Activated naive CD4-positive, alpha-beta T cell treated with anti-CD3 and anti-CD28 coated beads for 36 hours (primary cell): ENCODE measurements at regions of chr14 and their contacts with region 1.

Region 1: GRCh38 chr14:61598980-61599379 is 96.3 kb upstream of the HIF1A start:
- DNase-seq: peak; percentile 66
- H3K4me3 Mint-ChIP-seq: peak overlapping the region; percentile 14
- H3K27ac Mint-ChIP-seq: peak overlapping the region; percentile 80
- H3K4me1 Mint-ChIP-seq: peaks cover 48% of the 10 kb centered on the region
- H3K27me3 Mint-ChIP-seq: no peaks in the 10 kb centered on the region

Region 2: DNA sequence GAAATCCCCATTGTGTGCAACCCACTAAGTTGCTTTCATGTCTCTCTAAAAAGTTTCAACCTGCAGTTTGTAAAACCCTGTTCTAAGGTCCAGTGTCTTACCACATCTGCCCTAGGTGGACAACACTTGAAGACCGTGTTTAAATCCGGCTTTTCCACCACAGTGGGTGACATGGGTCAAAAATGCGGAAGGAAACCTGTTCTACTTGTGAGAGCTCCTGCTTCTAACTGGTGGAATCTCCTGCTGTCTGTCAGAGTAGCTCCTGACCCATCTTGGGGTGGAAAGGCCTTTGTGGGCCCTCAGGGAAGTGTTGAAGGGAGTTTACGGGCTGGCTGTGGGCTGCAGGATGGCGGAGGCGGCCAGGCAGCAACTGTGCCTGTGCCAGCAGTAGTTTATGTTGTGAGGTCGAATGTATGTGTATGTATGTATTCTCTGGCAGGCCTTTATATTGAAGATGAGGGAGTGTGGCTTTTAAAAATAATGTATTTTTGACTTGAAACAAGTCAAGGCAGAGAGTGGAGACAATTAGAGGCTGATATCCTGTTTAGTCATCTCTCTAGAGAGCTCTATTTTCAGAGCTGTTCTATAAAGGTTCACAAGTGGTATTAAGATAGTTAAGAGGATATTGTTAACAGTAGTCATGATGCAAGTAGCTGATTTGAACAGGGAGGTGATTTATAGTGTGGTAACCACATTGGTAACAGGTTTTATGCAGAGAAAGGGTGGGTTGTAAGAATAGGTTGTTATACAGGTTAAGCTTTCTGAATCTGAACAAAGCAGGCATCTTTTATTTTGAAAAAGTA is 210.6 kb before region 1 on chr14:
- CTCF ChIA-PET with region 1: no interaction called
- intact Hi-C with region 1: loop called (anchors 2 kb)
- DNase-seq: peak; percentile 50
- H3K4me3 Mint-ChIP-seq: no peak overlapping the region
- H3K27ac Mint-ChIP-seq: no peak overlapping the region
- H3K4me1 Mint-ChIP-seq: peaks cover 23% of the 10 kb centered on the region
- H3K27me3 Mint-ChIP-seq: no peaks in the 10 kb centered on the region

Region 3: GRCh38 chr14:61452452-61452851 is 146.5 kb before region 1 on chr14:
- CTCF ChIA-PET with region 1: no interaction called
- intact Hi-C with region 1: no loop called
- DNase-seq: peak; percentile 80
- H3K4me3 Mint-ChIP-seq: peak overlapping the region; percentile 32
- H3K27ac Mint-ChIP-seq: peak overlapping the region; percentile 95
- H3K4me1 Mint-ChIP-seq: peaks cover 94% of the 10 kb centered on the region
- H3K27me3 Mint-ChIP-seq: no peaks in the 10 kb centered on the region

Region 4: DNA sequence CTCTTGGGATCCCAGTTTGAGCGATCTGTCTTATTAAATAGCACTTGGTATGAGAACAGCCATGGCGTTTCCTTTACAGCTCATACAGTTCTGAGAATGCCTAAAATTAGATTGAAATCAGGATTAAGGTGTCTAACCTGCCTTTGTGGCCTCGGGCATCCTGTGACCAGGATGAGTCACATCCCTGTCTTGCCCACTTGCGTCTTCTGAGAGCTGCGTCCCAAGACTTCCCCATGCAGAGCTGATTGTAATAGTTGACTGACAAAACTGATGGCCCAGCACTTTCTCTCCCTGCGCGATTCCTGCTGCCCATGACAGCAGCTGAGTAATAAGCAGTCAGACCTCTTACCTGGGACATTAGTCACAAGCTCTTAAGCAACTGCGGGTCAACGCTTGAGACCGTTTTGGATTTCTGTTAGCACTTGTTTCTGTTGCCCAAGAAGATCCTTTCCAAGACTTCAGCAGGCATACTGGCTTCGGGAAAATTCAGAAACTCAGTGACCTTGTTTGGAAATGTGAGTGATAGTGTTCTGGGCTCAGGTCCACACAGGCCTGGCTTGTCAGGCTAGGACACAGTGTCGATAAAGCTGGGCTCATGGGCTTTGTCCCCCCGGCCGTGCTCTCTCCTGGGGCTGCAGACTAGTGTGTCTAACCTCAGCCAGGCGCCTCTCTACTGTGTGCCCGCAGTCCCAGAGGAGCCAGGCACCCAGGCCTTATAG is 73.5 kb before region 1 on chr14:
- CTCF ChIA-PET with region 1: interaction called, 3 read pairs
- intact Hi-C with region 1: loop called (anchors 1 kb)
- DNase-seq: peak; percentile 91
- H3K4me3 Mint-ChIP-seq: peak overlapping the region; percentile 22
- H3K27ac Mint-ChIP-seq: peak overlapping the region; percentile 94
- H3K4me1 Mint-ChIP-seq: peaks cover 84% of the 10 kb centered on the region
- H3K27me3 Mint-ChIP-seq: no peaks in the 10 kb centered on the region

Region 5: DNA sequence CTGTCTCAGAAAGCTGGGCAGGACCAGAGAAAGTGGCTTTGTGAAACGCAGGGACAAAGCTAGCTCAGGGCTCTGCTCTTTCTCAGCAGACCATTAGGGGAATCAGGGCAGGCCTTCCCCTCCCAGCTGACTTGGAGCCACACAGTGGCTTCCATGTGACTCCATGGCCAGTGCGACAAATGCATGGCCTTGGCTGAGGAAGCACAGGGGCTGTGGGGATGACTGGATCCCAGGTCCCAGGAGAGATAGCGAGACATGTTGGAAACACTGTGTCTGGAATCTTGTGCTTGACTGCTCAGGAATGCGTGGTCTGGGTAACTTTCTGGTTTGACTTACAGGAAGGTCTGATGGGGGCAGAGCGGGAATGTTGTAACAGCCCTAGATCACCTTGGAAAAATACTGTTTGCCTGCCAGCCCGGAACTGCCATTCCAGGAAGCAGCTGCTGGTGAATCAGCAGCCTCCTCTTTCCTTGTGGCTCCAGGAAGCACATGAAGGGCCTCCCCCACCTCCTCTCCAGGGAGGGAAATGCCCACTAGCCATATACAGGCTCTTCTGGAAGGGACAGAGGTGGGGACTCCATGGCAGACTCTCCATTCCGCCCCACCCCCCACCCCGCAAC is 37.2 kb before region 1 on chr14:
- CTCF ChIA-PET with region 1: interaction called, 5 read pairs
- intact Hi-C with region 1: loop called (anchors 1 kb)
- DNase-seq: no peak
- H3K4me3 Mint-ChIP-seq: no peak overlapping the region
- H3K27ac Mint-ChIP-seq: peak overlapping the region; percentile 75
- H3K4me1 Mint-ChIP-seq: peaks cover 73% of the 10 kb centered on the region
- H3K27me3 Mint-ChIP-seq: no peaks in the 10 kb centered on the region

Region 6: GRCh38 chr14:61620130-61620946 is 21.4 kb after region 1 on chr14:
- CTCF ChIA-PET with region 1: interaction called, 5 read pairs
- intact Hi-C with region 1: loop called (anchors 1 kb)
- DNase-seq: peak; percentile 85
- H3K4me3 Mint-ChIP-seq: no peak overlapping the region
- H3K27ac Mint-ChIP-seq: peak overlapping the region; percentile 89
- H3K4me1 Mint-ChIP-seq: peaks cover 80% of the 10 kb centered on the region
- H3K27me3 Mint-ChIP-seq: no peaks in the 10 kb centered on the region

Region 7: DNA sequence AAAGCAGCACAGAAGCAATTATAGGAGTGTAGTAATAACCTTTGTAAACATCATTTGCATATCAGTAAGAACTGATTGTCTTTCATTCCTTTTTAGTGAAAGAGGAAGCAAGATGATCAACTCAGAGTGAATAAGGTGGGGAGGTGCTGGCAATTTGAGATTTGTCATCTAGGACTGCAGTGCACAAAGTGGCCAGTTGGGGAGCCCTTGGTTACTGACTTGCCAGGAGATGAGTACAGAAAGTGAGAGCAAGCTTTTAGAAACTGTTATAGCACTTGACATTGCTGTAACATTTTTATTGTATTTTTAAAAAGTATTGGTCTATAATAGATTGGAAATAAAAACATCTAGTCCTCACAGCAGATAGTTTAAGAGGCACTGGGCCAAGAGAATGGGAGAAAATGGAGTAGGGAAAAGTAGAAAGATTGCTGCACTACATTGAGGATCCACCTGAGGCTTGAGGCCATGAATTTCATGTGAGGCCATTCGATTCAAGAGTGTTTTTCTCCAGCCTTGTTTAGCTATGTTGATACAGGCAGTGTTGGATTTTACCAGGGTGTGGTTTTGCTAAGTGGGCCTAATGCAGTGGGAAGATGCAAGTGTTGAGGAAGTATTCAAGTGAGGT is 261.4 kb after region 1 on chr14:
- CTCF ChIA-PET with region 1: no interaction called
- intact Hi-C with region 1: no loop called
- DNase-seq: peak; percentile 91
- H3K4me3 Mint-ChIP-seq: no peak overlapping the region
- H3K27ac Mint-ChIP-seq: no peak overlapping the region
- H3K4me1 Mint-ChIP-seq: no peaks in the 10 kb centered on the region
- H3K27me3 Mint-ChIP-seq: peaks cover 2% of the 10 kb centered on the region